ENCODE measurements at regions of chr3 and their contacts with region 1.

Region 1: GRCh38 chr3:159763602-159764489 is 224.8 kb upstream of the IL12A start:
- DNase-seq: peak; percentile 85
- H3K4me3 ChIP-seq: peak overlapping the region; percentile 22 to 80 (median 64)
- H3K27ac ChIP-seq: peak overlapping the region; percentile 88
- H3K4me1 ChIP-seq: peaks cover 36% of the 10 kb centered on the region
- H3K27me3 ChIP-seq: no peaks in the 10 kb centered on the region
- CTCF ChIP-seq: peak in 1 of 2 donors; percentile 20
- POLR2A ChIP-seq: peak; percentile 12

Region 2: DNA sequence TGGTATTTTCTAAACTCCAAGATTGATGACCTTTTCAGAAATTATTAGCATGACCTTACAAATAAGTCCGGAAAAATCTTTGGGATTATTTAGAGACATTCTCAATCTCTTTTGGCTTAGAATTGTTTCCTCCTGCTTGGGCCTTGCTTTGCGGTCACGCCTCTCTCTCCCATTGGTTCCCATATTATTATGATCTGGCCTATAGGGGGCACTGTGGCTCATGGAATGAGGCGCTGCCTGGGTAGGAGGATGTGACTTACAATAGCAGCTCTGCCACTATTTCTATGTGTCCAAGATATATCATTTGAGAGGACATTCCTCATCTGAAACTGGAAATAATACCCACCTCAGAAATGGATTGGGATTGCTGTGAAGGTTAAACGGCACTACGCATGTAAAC is 497.1 kb before region 1 on chr3:
- CTCF ChIA-PET with region 1: interaction called, 3 read pairs
- POLR2A ChIA-PET with region 1: no interaction called
- dilution Hi-C with region 1: no loop called
- intact Hi-C with region 1: loop called (anchors 2 kb)
- DNase-seq: peak; percentile 29
- H3K4me3 ChIP-seq: no peak overlapping the region
- H3K27ac ChIP-seq: no peak overlapping the region
- H3K4me1 ChIP-seq: no peaks in the 10 kb centered on the region
- H3K27me3 ChIP-seq: peaks cover 4 to 12% of the 10 kb centered on the region in 2 experiments
- CTCF ChIP-seq: peak; percentile 15 to 39
- POLR2A ChIP-seq: no peak

Region 3: DNA sequence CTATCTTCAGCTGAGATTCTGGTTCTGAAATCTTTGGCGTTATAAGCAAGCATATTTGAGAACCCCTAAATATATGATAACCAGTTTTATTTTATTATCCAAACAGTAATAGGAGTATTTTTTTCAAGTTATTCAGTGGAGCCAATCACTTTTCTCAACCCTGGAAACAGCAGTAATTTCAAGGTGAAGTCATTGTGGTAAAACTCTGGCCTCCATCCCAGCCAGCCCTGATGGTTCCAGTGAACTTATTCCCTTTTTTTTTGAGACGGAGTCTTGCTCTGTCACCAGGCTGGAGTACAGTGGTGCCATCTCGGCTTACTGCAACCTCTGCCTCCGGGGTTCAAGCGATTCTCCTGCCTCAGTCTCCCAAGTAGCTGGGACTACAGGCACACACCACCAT is 320.6 kb before region 1 on chr3:
- CTCF ChIA-PET with region 1: no interaction called
- POLR2A ChIA-PET with region 1: no interaction called
- dilution Hi-C with region 1: no loop called
- intact Hi-C with region 1: no loop called
- DNase-seq: no peak
- H3K4me3 ChIP-seq: no peak overlapping the region
- H3K27ac ChIP-seq: no peak overlapping the region
- H3K4me1 ChIP-seq: no peaks in the 10 kb centered on the region
- H3K27me3 ChIP-seq: no peaks in the 10 kb centered on the region
- CTCF ChIP-seq: no peak
- POLR2A ChIP-seq: no peak

Region 4: GRCh38 chr3:159726231-159726964 is 37.4 kb before region 1 on chr3:
- CTCF ChIA-PET with region 1: interaction called, 4 read pairs
- POLR2A ChIA-PET with region 1: interaction called, 3 read pairs
- dilution Hi-C with region 1: no loop called
- intact Hi-C with region 1: loop called (anchors 1 kb)
- DNase-seq: no peak
- H3K4me3 ChIP-seq: no peak overlapping the region
- H3K27ac ChIP-seq: no peak overlapping the region
- H3K4me1 ChIP-seq: peaks cover 27% of the 10 kb centered on the region
- H3K27me3 ChIP-seq: peaks cover 2 to 5% of the 10 kb centered on the region in 2 experiments
- CTCF ChIP-seq: no peak
- POLR2A ChIP-seq: no peak

Region 5: GRCh38 chr3:159796744-159797143 is 32.9 kb after region 1 on chr3:
- CTCF ChIA-PET with region 1: interaction called, 124 read pairs
- POLR2A ChIA-PET with region 1: no interaction called
- dilution Hi-C with region 1: no loop called
- intact Hi-C with region 1: loop called (anchors 2 kb)
- DNase-seq: peak; percentile 86
- H3K4me3 ChIP-seq: no peak overlapping the region
- H3K27ac ChIP-seq: peak overlapping the region; percentile 79
- H3K4me1 ChIP-seq: peaks cover 40% of the 10 kb centered on the region
- H3K27me3 ChIP-seq: no peaks in the 10 kb centered on the region
- CTCF ChIP-seq: no peak
- POLR2A ChIP-seq: no peak

Region 6: GRCh38 chr3:159884661-159885402 is 121.0 kb after region 1 on chr3:
- CTCF ChIA-PET with region 1: no interaction called
- POLR2A ChIA-PET with region 1: interaction called, 3 read pairs
- dilution Hi-C with region 1: no loop called
- intact Hi-C with region 1: loop called (anchors 2 kb)
- DNase-seq: peak; percentile 75
- H3K4me3 ChIP-seq: no peak overlapping the region
- H3K27ac ChIP-seq: peak overlapping the region; percentile 46
- H3K4me1 ChIP-seq: peaks cover 34% of the 10 kb centered on the region
- H3K27me3 ChIP-seq: no peaks in the 10 kb centered on the region
- CTCF ChIP-seq: peak; percentile 27 to 37
- POLR2A ChIP-seq: no peak

Region 7: GRCh38 chr3:159950156-159950898 is 186.5 kb after region 1 on chr3:
- CTCF ChIA-PET with region 1: no interaction called
- POLR2A ChIA-PET with region 1: no interaction called
- dilution Hi-C with region 1: no loop called
- intact Hi-C with region 1: no loop called
- DNase-seq: no peak
- H3K4me3 ChIP-seq: no peak overlapping the region
- H3K27ac ChIP-seq: no peak overlapping the region
- H3K4me1 ChIP-seq: no peaks in the 10 kb centered on the region
- H3K27me3 ChIP-seq: no peaks in the 10 kb centered on the region
- CTCF ChIP-seq: no peak
- POLR2A ChIP-seq: no peak

Region 8: GRCh38 chr3:160565442-160566403 is 801.9 kb after region 1 on chr3 and contains the start of gene KPNA4:
- CTCF ChIA-PET with region 1: no interaction called
- POLR2A ChIA-PET with region 1: no interaction called
- dilution Hi-C with region 1: no loop called
- intact Hi-C with region 1: loop called (anchors 10 kb)
- DNase-seq: peak; percentile 98
- H3K4me3 ChIP-seq: peak within 1 kb of the TSS; percentile 90 to 94 (median 93)
- H3K27ac ChIP-seq: peak within 1 kb of the TSS; percentile 99
- H3K4me1 ChIP-seq: peaks cover 55% of the 10 kb centered on the region
- H3K27me3 ChIP-seq: no peaks in the 10 kb centered on the region
- CTCF ChIP-seq: no peak
- POLR2A ChIP-seq: peak; percentile 70
- total RNA-seq, gene KPNA4: 70.1 and 80.7 TPM in 2 replicates

Measured in endothelial cell of umbilical vein (primary cell).